Activated CD8-positive, alpha-beta T cell treated with anti-CD3 and anti-CD28 coated beads for 36 hours (primary cell): ENCODE measurements at regions of chr20 and their contacts with region 1.

Region 1: GRCh38 chr20:41136680-41137613 is at the start of gene PLCG1:
- DNase-seq: peak; percentile 90
- ATAC-seq: peak; percentile 68
- H3K4me3 Mint-ChIP-seq: peak within 1 kb of the TSS; percentile 91
- H3K27ac Mint-ChIP-seq: peak within 1 kb of the TSS; percentile 91
- H3K4me1 Mint-ChIP-seq: peaks cover 64% of the 10 kb centered on the region
- H3K27me3 Mint-ChIP-seq: no peaks in the 10 kb centered on the region
- CTCF ChIP-seq: no peak
- total RNA-seq, gene PLCG1: 259 to 260 TPM

Region 2: GRCh38 chr20:40786336-40786735 is 350.6 kb before region 1 on chr20:
- CTCF ChIA-PET with region 1: no interaction called
- POLR2A ChIA-PET with region 1: no interaction called
- intact Hi-C with region 1: no loop called
- DNase-seq: no peak
- ATAC-seq: no peak
- H3K4me3 Mint-ChIP-seq: no peak overlapping the region
- H3K27ac Mint-ChIP-seq: no peak overlapping the region
- H3K4me1 Mint-ChIP-seq: no peaks in the 10 kb centered on the region
- H3K27me3 Mint-ChIP-seq: peaks cover 7% of the 10 kb centered on the region
- CTCF ChIP-seq: no peak

Region 3: GRCh38 chr20:41149679-41150131 is 12.8 kb after region 1 on chr20:
- CTCF ChIA-PET with region 1: interaction called, 209 read pairs
- POLR2A ChIA-PET with region 1: interaction called, 361 read pairs
- intact Hi-C with region 1: no loop called
- DNase-seq: no peak
- ATAC-seq: peak; percentile 21
- H3K4me3 Mint-ChIP-seq: no peak overlapping the region
- H3K27ac Mint-ChIP-seq: peak overlapping the region; percentile 98
- H3K4me1 Mint-ChIP-seq: peaks cover 94% of the 10 kb centered on the region
- H3K27me3 Mint-ChIP-seq: no peaks in the 10 kb centered on the region
- CTCF ChIP-seq: no peak

Region 4: DNA sequence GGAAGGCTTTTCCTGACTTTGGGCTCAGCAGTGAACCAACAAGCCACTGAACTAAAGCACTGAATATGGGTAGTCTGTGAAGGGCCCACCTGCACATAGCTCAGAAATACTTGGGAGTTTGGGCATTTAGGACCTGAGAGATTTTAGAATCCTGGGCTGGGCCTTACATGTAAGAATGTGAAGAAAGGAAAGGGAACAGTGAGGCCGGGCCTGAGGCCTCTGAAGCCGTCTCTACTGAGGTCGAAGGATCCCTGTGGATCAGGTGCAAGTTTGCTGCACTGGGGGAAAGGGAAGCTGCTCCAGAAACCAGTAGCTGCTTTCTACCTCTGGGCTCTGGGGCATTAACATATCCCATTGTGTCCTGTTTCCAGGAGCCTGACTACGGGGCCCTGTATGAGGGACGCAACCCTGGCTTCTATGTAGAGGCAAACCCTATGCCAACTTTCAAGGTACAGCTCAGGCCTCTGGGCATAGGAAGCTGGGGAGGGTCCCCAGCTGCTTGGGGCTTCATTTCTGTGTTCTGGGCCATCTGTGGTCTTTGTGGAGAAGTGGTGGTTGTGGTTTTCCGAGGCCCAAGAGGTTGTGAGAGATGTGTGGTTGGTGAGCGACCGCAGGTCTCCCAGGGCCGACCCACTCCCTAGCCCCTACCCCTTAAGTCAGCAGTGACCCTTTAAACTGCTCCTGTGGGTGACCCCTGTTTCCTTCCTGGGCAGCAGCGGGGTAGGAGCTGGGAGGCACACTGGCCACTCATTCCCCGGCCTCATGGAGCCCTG is 30.7 kb after region 1 on chr20:
- CTCF ChIA-PET with region 1: interaction called, 33 read pairs
- POLR2A ChIA-PET with region 1: interaction called, 361 read pairs
- intact Hi-C with region 1: no loop called
- DNase-seq: no peak
- ATAC-seq: no peak
- H3K4me3 Mint-ChIP-seq: no peak overlapping the region
- H3K27ac Mint-ChIP-seq: peak overlapping the region; percentile 67
- H3K4me1 Mint-ChIP-seq: peaks cover 62% of the 10 kb centered on the region
- H3K27me3 Mint-ChIP-seq: no peaks in the 10 kb centered on the region
- CTCF ChIP-seq: no peak

Region 5: GRCh38 chr20:41232973-41233926 is 96.3 kb after region 1 on chr20:
- CTCF ChIA-PET with region 1: interaction called, 72 read pairs
- POLR2A ChIA-PET with region 1: interaction called, 4 read pairs
- intact Hi-C with region 1: loop called (anchors 1 kb)
- DNase-seq: no peak
- ATAC-seq: no peak
- H3K4me3 Mint-ChIP-seq: no peak overlapping the region
- H3K27ac Mint-ChIP-seq: peak overlapping the region; percentile 13
- H3K4me1 Mint-ChIP-seq: peaks cover 42% of the 10 kb centered on the region
- H3K27me3 Mint-ChIP-seq: no peaks in the 10 kb centered on the region
- CTCF ChIP-seq: no peak

Region 6: DNA sequence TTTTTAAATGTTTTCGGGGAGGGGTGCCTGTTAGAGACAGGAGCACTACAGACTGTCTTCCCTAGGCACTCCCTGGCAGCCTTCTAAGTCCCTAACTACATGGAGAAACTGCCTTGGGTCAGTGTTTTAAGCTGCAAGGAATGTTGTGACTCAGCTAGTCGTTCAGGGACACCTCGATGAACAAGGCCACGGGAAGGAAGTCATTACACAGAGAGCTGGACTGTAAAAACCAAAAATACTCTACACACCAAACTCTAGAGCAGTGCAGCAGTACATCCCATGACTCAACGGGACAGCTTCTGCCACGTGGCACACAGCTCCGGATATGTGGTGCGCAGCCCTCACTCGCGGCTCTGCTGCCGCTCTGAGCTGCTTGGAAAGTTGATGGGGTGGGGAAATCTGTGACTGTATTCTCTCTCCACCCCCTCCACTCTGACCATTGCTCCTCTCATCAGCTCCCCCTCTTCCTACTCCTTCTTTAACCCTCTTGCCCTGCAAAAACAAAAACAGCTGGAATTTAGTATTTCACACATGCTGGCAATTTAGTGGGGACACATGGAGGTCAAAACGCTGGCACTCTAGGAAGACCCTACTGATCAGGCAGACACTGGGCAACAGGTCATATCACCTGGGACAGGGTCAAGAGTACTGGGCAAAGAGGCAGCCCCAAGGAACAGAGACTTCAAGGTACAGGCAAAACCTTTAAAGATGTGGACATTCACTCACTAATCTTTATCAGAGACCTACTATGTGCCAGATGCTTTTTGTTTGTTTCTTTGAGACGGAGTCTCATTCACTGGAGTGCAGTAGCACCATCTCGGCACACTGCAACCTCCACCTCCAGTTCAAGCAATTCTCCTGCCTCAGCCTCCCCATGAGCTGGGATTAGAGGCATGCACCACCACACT is 192.7 kb after region 1 on chr20:
- CTCF ChIA-PET with region 1: interaction called, 17 read pairs
- POLR2A ChIA-PET with region 1: interaction called, 5 read pairs
- intact Hi-C with region 1: no loop called
- DNase-seq: peak; percentile 80
- ATAC-seq: peak; percentile 99
- H3K4me3 Mint-ChIP-seq: no peak overlapping the region
- H3K27ac Mint-ChIP-seq: peak overlapping the region; percentile 53
- H3K4me1 Mint-ChIP-seq: peaks cover 14% of the 10 kb centered on the region
- H3K27me3 Mint-ChIP-seq: no peaks in the 10 kb centered on the region
- CTCF ChIP-seq: no peak

Region 7: DNA sequence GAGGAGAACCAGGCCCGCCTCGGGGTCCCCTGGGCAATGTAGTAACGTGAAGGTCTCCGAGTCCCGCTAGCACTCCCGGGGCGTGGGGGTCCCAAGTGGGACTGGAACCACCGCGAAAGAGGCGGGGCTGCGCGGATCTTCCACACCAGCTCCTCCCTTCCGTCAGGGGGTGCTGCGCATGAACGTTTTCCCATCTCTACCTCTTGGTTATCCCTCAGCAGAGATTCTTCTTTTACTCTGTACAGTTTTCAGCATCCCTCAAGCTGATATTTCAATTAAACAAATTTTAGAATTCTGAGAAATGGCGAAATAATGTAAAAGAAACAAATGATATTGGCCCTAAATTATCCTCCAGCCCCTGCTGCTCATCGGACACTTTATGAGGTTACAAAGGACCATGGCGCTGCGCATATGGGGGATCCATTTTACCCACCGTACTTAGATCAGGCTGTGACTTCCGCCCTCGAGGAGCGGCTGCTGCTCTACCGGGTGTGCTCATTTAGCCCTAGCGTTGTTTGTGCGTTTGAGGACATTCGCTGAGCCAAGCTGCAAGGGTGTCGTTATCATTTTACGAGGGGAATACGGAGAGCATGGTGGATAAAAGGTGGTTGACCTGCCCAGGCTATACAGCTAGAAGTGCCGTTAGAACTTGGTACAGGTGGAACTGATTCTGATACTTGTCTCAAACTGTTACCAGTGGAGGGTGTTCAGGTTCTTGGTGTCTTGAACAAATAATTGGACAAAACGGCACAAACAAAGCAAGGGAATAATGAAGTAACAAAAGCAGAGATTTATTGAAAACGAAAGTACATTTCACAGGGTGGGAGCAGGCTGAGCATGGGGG is 556.4 kb after region 1 on chr20:
- CTCF ChIA-PET with region 1: no interaction called
- POLR2A ChIA-PET with region 1: no interaction called
- intact Hi-C with region 1: no loop called
- DNase-seq: peak; percentile 88
- ATAC-seq: peak; percentile 90
- H3K4me3 Mint-ChIP-seq: peak overlapping the region; percentile 90
- H3K27ac Mint-ChIP-seq: peak overlapping the region; percentile 92
- H3K4me1 Mint-ChIP-seq: peaks cover 15% of the 10 kb centered on the region
- H3K27me3 Mint-ChIP-seq: peaks cover 2% of the 10 kb centered on the region
- CTCF ChIP-seq: peak; percentile 68